Activated T-helper 1 cell treated with anti-CD3 and anti-CD28 coated beads, Interleukin-12 subunit alpha, Interleukin-12 subunit beta, Interleukin-2, Interleukin-4 antibody, amounts not matched to agents 30 ng/mL and 10 ng/mL and 1 ng/mL, durations not matched to agents 14 hours and 24 hours and 36 hours (primary cell): ENCODE measurements at regions of chr10 and their contacts with region 1.

Region 1: DNA sequence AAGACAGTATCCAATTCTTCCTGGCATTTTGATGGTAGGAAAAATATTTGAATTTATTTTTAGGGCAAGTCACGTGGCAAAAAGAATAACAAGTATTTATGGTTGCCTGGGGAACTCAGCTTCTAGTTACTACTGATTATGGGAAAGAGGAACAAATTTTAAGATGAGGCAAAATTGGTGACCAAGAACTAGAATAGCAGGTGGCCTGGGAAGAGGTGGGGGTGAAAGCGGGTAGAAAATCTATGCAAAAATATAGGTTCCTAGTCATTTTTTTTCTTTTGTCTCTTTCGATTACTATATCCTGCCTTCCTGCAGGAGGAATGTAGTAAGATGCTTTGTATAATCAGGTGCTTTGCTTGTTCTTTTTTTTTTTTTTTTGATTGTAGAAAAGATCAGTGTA is 27.8 kb downstream of the ENTPD1 start:
- DNase-seq: no peak
- H3K4me3 Mint-ChIP-seq: no peak overlapping the region
- H3K27ac Mint-ChIP-seq: peak overlapping the region; percentile 69
- H3K4me1 Mint-ChIP-seq: peaks cover 75% of the 10 kb centered on the region
- H3K27me3 Mint-ChIP-seq: no peaks in the 10 kb centered on the region

Region 2: DNA sequence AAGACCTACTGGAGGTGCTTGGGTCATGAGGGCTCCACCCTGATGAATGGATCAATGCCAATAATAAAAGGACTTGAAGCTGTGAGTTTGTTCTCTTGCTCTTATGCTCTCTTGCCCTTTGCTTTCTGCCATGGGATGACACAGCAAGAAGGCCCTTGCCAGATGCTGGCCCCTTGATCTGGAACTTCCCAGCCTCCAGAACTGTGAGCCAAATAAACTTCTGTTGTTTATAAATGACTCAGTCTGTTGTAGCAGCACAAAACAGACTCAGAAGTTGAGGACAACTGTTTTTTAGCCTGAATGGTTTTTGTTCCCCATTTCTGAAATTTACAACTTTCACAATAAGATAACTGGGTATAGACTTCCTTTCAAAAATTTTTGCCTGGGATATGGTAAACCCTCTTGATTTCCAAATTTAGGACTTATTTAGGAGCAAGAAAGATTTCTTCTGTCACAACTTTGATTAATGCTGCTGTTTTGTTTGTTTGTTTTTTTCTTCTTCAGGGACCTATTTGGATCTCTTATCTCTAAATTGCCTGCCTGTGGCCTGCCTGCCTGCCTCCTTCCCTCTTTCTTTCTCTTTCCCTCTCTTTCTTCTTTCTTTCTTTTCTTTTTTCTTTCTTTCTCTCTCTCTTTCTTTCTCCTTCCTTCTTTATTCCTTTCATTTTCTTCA is 15.7 kb before region 1 on chr10:
- intact Hi-C with region 1: loop called (anchors 2 kb)
- DNase-seq: no peak
- H3K4me3 Mint-ChIP-seq: no peak overlapping the region
- H3K27ac Mint-ChIP-seq: peak overlapping the region; percentile 73
- H3K4me1 Mint-ChIP-seq: peaks cover 30% of the 10 kb centered on the region
- H3K27me3 Mint-ChIP-seq: peaks cover 5% of the 10 kb centered on the region

Region 3: GRCh38 chr10:95820363-95820762 is 36.6 kb after region 1 on chr10:
- intact Hi-C with region 1: no loop called
- DNase-seq: no peak
- H3K4me3 Mint-ChIP-seq: no peak overlapping the region
- H3K27ac Mint-ChIP-seq: peak overlapping the region; percentile 88
- H3K4me1 Mint-ChIP-seq: peaks cover 58% of the 10 kb centered on the region
- H3K27me3 Mint-ChIP-seq: no peaks in the 10 kb centered on the region